GM10248 (cell line): ENCODE measurements at regions of chr2 and their contacts with region 1.

Region 1: GRCh38 chr2:64523666-64524603 is at the start of gene AFTPH:
- DNase-seq: peak; percentile 98
- CTCF ChIP-seq: no peak

Region 2: DNA sequence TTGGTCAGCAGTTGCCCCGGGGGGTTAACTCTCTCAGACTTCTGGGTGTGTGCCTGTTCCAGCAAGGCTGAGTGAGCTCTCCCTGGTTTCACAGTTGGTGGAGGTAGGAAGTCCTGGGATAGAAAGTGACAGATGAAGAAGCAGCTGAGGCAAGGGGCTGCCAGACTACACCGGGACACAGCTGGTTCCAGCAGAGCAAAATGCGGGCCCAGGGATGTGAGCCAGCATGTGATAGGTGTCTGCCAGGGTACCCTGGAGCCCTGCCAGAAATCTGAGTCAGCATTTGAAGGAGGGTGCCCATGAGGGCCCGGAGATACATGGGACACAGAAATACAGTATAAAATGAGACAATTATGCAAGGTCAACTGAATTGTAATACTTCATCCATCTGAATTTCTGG is 149.2 kb before region 1 on chr2:
- CTCF ChIA-PET with region 1: no interaction called
- POLR2A ChIA-PET with region 1: no interaction called
- DNase-seq: no peak
- CTCF ChIP-seq: no peak

Region 3: DNA sequence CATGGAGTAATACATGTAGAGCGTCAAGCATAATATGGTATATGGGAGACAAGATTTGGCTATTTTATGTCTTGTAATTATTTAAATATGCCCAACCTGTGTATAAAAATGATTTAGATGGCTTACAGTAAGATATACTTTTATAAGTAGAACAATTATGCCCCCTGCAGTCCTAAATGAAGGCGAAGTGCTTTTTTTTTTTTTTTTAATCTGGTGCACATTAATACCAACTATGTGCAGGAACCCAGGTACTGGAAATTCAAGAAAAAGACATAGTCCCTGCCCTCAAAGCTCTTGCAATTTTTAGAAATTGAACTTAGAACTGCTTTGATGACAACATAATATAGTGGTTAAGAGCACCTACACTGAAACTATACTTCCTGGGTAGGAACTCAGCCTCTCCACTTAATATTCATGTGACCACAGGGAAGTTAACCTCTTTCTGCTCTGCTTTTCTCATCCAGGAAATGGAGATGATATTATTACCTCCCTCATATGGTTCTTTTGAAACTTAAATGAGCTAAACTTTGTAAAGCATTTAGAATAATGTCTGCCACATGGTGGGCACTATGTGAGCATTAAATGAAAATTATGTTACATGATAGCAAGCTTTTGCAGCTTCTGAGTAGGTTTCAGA is 38.3 kb after region 1 on chr2:
- CTCF ChIA-PET with region 1: interaction called, 125 read pairs
- POLR2A ChIA-PET with region 1: no interaction called
- DNase-seq: no peak
- CTCF ChIP-seq: peak; percentile 36

Region 4: DNA sequence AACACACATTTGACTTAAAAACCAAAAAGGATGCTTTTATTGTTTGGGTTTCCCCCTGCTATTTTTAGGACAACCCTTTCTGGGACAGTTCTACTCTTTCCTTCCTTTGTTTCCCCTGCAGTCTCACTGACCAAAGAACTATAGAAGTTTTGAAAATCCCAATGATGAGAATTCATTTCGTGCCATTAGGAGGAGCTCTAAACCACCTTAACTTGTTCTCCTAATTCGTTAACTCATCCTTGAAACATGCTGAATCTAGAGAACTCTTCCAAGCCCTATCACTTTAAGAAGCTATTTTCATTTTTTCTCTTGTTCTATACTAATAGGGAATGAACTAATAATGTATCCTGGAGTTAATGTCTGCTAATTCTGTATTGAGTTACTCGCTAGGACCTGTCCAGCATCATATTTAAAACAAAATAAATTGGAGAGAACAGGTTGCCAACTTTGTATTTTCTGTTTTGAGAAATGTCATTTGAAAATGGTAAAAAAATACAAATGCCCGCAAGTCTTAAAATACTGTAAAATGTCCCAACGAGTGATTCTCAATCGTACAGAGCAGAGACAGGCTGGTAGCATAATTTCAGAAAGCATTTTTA is 63.0 kb after region 1 on chr2:
- CTCF ChIA-PET with region 1: interaction called, 19 read pairs
- POLR2A ChIA-PET with region 1: no interaction called
- DNase-seq: peak; percentile 37
- CTCF ChIP-seq: peak; percentile 55

Region 5: DNA sequence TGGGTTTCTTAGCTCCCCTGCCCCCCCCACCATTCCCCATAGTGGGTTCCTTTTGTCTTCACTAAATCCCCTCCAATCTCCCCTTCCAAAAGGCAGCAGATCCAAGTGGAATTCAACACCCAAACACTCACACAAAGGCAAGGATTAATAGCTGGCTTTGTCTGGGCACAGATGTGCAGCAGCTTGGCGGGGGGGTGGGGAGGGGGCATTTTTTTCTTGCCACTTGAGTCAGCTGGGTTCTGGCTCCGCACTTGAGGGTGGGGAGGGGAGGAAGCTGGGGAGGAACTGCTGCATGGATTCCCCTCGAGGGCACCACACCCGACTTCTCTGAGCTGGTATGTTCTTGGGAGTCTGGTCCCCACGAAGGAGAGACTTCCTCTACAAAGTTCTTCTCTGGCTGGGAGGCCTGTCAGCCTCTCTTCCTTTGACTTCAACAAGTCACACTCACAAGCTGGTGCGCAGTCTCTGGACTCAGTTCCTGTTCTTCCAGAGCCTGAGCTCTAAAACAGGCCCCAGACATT is 93.8 kb after region 1 on chr2:
- CTCF ChIA-PET with region 1: interaction called, 10 read pairs
- POLR2A ChIA-PET with region 1: no interaction called
- DNase-seq: no peak
- CTCF ChIP-seq: no peak

Region 6: GRCh38 chr2:64859312-64860212 is 335.6 kb after region 1 on chr2:
- CTCF ChIA-PET with region 1: interaction called, 18 read pairs
- POLR2A ChIA-PET with region 1: interaction called, 5 read pairs
- DNase-seq: peak; percentile 79
- CTCF ChIP-seq: no peak

Region 7: GRCh38 chr2:64873472-64873924 is 349.6 kb after region 1 on chr2:
- CTCF ChIA-PET with region 1: interaction called, 26 read pairs
- POLR2A ChIA-PET with region 1: no interaction called
- DNase-seq: peak; percentile 83
- CTCF ChIP-seq: peak; percentile 98